HCT116 (cell line): ENCODE measurements at regions of chr2 and their contacts with region 1.

Region 1: GRCh38 chr2:69755862-69756467 is 14.0 kb downstream of the ANXA4 start:
- DNase-seq: peak; percentile 78
- ATAC-seq: peak; percentile 93
- H3K4me3 ChIP-seq: peak overlapping the region; percentile 24 to 48
- H3K27ac ChIP-seq: peak overlapping the region; percentile 53
- H3K4me1 ChIP-seq: peaks cover 18 to 33% of the 10 kb centered on the region in 2 experiments
- H3K27me3 ChIP-seq: no peaks in the 10 kb centered on the region
- CTCF ChIP-seq: no peak
- POLR2A ChIP-seq: no peak
- RAD21 ChIP-seq: 0 out of 2 replicates have a peak, but pooled peaks have one; percentile 26

Region 2: DNA sequence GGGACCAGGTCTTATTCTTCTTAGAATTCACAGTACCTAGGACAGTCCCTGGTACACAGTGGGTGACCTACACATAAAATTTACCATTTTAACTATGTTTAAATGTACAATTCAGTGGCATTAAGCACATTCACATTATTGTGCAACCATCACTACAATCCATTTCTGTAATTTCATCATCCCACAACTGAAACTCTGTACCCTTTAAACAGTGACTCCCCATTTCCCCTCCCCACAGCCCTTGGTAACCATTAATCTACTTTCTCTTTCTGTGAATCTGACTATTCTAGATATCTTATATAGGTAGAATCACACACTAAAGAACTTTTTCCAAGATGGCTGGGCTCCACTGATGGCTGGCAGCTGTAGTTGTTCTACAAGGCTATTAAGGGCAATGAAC is 410.5 kb before region 1 on chr2:
- CTCF ChIA-PET with region 1: no interaction called
- POLR2A ChIA-PET with region 1: no interaction called
- RAD21 ChIA-PET with region 1: no interaction called
- intact Hi-C with region 1: no loop called
- DNase-seq: no peak
- ATAC-seq: no peak
- H3K4me3 ChIP-seq: no peak overlapping the region
- H3K27ac ChIP-seq: no peak overlapping the region
- H3K4me1 ChIP-seq: no peaks in the 10 kb centered on the region
- H3K27me3 ChIP-seq: no peaks in the 10 kb centered on the region
- CTCF ChIP-seq: no peak
- POLR2A ChIP-seq: no peak
- RAD21 ChIP-seq: no peak

Region 3: DNA sequence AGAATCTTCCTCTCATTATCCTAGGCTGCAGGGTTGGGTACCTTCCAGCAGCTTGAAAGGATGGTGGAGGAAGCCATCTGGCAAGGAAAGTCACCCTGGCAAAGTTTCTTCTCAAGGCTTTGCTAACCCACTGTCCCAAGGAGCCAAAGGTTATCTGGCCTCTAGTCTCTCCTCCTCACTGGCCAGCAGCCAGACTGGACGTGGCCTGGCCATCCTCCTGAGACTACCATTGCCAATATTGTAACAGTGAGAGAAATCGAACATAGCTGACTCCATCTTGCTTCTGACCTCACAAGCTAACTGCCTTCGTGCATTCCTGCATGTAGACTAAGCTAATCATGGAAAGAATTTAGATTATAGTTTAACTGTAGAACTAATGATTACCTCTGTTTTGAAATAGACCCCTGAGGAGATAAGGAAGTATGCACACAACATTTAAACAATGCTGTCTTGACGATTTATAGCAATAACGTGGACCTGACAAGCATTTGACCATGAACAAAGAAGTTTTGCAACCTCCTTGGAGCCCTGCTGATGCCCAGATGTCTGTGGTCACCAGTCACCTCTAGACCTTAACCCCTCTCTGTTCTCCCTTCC is 21.8 kb before region 1 on chr2:
- CTCF ChIA-PET with region 1: no interaction called
- POLR2A ChIA-PET with region 1: no interaction called
- RAD21 ChIA-PET with region 1: interaction called in 1 of 2 experiments, 10 read pairs
- intact Hi-C with region 1: no loop called
- DNase-seq: no peak
- ATAC-seq: no peak
- H3K4me3 ChIP-seq: no peak overlapping the region
- H3K27ac ChIP-seq: no peak overlapping the region
- H3K4me1 ChIP-seq: no peaks in the 10 kb centered on the region
- H3K27me3 ChIP-seq: no peaks in the 10 kb centered on the region
- CTCF ChIP-seq: no peak
- POLR2A ChIP-seq: no peak
- RAD21 ChIP-seq: no peak

Region 4: GRCh38 chr2:69863298-69863697 is 107.3 kb after region 1 on chr2:
- CTCF ChIA-PET with region 1: no interaction called
- POLR2A ChIA-PET with region 1: no interaction called
- RAD21 ChIA-PET with region 1: no interaction called
- intact Hi-C with region 1: no loop called
- DNase-seq: no peak
- ATAC-seq: no peak
- H3K4me3 ChIP-seq: no peak overlapping the region
- H3K27ac ChIP-seq: no peak overlapping the region
- H3K4me1 ChIP-seq: no peaks in the 10 kb centered on the region
- H3K27me3 ChIP-seq: no peaks in the 10 kb centered on the region
- CTCF ChIP-seq: no peak
- POLR2A ChIP-seq: no peak
- RAD21 ChIP-seq: no peak